Heart left ventricle (tissue), 16 donors: ENCODE measurements at regions of chr1 and their contacts with region 1.

Region 1: GRCh38 chr1:9910425-9911178 is 533 bp upstream of the CTNNBIP1 start:
- DNase-seq: peak; percentile 100
- ATAC-seq: peak; percentile 97 to 99 (median 98)
- H3K4me3 ChIP-seq: peak overlapping the region in 11 of 12 donors; percentile 47 to 85 (median 62)
- H3K27ac ChIP-seq: peak overlapping the region; percentile 86 to 98 (median 92)
- H3K4me1 ChIP-seq: peaks cover 0 to 56% (median 27%) of the 10 kb centered on the region in 12 donors
- H3K27me3 ChIP-seq: no peaks in the 10 kb centered on the region
- CTCF ChIP-seq: no peak
- POLR2A ChIP-seq: peak in 1 of 2 donors; percentile 90

Region 2: GRCh38 chr1:9494929-9495758 is 415.5 kb before region 1 on chr1:
- intact Hi-C with region 1: no loop called
- DNase-seq: peak; percentile 33 to 77 (median 49)
- ATAC-seq: peak in 3 of 4 donors; percentile 54 to 80 (median 65)
- H3K4me3 ChIP-seq: peak overlapping the region in 9 of 12 donors; percentile 26 to 53 (median 39)
- H3K27ac ChIP-seq: no peak overlapping the region
- H3K4me1 ChIP-seq: peaks cover 0 to 10% (median 4%) of the 10 kb centered on the region in 12 donors
- H3K27me3 ChIP-seq: peaks cover 0 to 8% (median 0%) of the 10 kb centered on the region in 9 donors
- CTCF ChIP-seq: peak; percentile 88 to 100 (median 98)
- POLR2A ChIP-seq: no peak

Region 3: GRCh38 chr1:9784508-9785133 is 126.0 kb before region 1 on chr1:
- intact Hi-C with region 1: loop called in 2 of 10 experiments (anchors 2 to 5 kb)
- DNase-seq: peak in 3 of 5 donors; percentile 21 to 38 (median 32)
- ATAC-seq: peak in 1 of 4 donors; percentile 33
- H3K4me3 ChIP-seq: no peak overlapping the region
- H3K27ac ChIP-seq: no peak overlapping the region
- H3K4me1 ChIP-seq: peaks cover 0 to 12% (median 0%) of the 10 kb centered on the region in 12 donors
- H3K27me3 ChIP-seq: no peaks in the 10 kb centered on the region
- CTCF ChIP-seq: peak; percentile 58 to 74 (median 66)
- POLR2A ChIP-seq: no peak

Region 4: DNA sequence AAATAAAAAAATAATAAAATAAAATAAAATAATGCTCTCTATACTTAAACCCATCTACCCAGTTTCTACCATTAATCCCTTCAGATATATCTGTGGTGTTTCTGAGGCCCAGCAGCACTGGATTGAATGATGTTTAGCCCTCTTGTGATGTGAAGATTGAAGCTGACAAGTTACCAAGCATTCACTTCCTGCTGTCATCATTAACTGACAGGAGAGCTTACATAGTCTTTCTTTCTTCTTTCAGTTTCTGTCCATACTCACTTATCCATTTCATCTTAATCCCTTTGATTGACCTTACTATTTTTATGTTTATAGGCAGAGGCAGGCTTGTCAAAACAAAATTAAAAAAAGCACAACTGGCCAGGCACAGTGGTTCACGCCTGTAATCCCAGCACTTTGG is 449.4 kb after region 1 on chr1:
- intact Hi-C with region 1: no loop called
- DNase-seq: no peak
- ATAC-seq: no peak
- H3K4me3 ChIP-seq: no peak overlapping the region
- H3K27ac ChIP-seq: no peak overlapping the region
- H3K4me1 ChIP-seq: peaks cover 0 to 6% (median 0%) of the 10 kb centered on the region in 12 donors
- H3K27me3 ChIP-seq: no peaks in the 10 kb centered on the region
- CTCF ChIP-seq: no peak
- POLR2A ChIP-seq: no peak